Astrocyte of the cerebellum (primary cell): ENCODE measurements at regions of chrX and their contacts with region 1.

Region 1: DNA sequence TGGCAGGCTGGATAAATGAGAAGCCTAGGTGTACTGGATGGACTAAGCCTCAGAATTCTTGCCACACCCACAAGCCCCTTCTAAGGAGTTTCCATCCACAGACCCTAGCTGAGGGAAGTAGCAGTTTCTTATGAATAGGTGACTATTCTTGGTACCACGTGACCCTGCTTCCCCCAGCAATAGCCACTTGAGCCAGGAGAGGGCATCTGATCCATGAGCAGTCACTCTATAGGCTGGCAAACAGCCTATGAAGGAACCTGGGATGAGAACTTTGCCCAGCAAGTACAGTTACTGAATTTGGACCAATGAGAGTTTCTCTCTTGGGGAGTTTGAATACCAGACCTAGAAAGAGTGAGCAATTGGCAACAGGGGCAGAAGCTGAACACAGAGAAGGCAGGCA is 84.0 kb downstream of the RTL9 start:
- DNase-seq: no peak
- H3K4me3 ChIP-seq: no peak overlapping the region
- CTCF ChIP-seq: peak; percentile 36

Region 2: GRCh38 chrX:110407910-110408545 is 34.6 kb before region 1 on chrX:
- in situ Hi-C with region 1: no loop called
- DNase-seq: no peak
- H3K4me3 ChIP-seq: no peak overlapping the region
- CTCF ChIP-seq: peak; percentile 62

Region 3: GRCh38 chrX:110847334-110847733 is 404.7 kb after region 1 on chrX:
- in situ Hi-C with region 1: loop called (anchors 5 kb)
- DNase-seq: peak; percentile 67
- H3K4me3 ChIP-seq: no peak overlapping the region
- CTCF ChIP-seq: peak; percentile 52

Region 4: GRCh38 chrX:110944311-110944750 is 501.7 kb after region 1 on chrX:
- in situ Hi-C with region 1: loop called (anchors 10 kb)
- DNase-seq: no peak
- H3K4me3 ChIP-seq: peak overlapping the region; percentile 40
- CTCF ChIP-seq: no peak